ENCODE measurements at regions of chr9 and their contacts with region 1.

Region 1: DNA sequence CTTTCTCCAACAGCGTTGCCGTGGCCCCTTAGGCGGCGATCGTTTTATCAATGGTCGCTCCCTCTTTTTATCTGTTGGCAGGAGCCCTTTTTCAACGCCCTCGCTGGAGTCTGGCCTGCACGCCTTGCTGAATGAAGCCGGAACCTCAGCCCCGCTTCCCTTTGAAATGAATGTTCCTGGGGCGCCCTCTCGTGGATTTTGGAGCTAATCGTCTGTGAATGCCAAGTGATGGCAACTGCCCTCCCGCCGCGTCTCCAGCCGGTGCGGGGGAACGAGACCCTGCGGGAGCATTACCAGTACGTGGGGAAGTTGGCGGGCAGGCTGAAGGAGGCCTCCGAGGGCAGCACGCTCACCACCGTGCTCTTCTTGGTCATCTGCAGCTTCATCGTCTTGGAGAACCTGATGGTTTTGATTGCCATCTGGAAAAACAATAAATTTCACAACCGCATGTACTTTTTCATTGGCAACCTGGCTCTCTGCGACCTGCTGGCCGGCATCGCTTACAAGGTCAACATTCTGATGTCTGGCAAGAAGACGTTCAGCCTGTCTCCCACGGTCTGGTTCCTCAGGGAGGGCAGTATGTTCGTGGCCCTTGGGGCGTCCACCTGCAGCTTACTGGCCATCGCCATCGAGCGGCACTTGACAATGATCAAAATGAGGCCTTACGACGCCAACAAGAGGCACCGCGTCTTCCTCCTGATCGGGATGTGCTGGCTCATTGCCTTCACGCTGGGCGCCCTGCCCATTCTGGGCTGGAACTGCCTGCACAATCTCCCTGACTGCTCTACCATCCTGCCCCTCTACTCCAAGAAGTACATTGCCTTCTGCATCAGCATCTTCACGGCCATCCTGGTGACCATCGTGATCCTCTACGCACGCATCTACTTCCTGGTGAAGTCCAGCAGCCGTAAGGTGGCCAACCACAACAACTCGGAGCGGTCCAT is 10.0 kb downstream of the S1PR3 start:
- DNase-seq: peak; percentile 92 to 96 (median 93)
- H3K4me3 ChIP-seq: peak overlapping the region in 1 of 3 donors; percentile 4
- H3K27ac ChIP-seq: peak overlapping the region in 1 of 2 donors; percentile 3
- H3K4me1 ChIP-seq: peaks cover 0 to 10% (median 0%) of the 10 kb centered on the region in 3 donors
- H3K27me3 ChIP-seq: no peaks in the 10 kb centered on the region
- CTCF ChIP-seq: peak; percentile 81

Region 2: DNA sequence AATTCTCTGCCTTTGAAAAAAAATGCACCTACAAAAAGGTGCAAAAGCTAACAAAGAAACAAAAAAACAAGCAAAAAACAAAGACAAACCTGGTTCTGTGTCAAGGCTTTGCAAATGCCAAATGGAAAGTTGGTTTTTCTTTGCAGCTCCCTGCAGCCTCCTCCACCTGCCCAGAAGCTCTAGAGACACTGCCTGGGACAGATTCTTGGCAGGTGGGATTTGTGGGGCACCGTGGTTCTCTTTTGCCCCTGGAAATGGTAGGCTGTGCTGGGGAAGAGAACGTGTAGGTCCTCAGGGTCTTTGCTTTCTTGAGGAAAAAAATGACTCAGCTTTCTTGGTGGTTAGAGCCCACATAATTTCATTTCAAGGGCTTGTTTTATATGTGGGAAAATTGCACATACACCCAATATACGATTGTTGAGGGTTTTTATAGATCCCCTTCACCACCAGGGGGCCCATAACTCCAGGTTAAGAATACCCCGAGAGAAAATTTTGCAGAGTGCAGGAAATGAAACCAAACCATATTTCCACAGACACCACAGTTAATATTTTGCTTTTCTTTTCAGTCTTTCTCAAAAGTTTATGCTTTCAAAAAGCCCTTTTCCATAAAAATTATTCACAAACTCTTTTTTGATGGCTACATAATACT is 407.6 kb before region 1 on chr9:
- intact Hi-C with region 1: loop called (anchors 5 kb)
- DNase-seq: peak in 3 of 5 donors; percentile 40 to 81 (median 44)
- H3K4me3 ChIP-seq: no peak overlapping the region
- H3K27ac ChIP-seq: no peak overlapping the region
- H3K4me1 ChIP-seq: peaks cover 0 to 3% (median 0%) of the 10 kb centered on the region in 3 donors
- H3K27me3 ChIP-seq: no peaks in the 10 kb centered on the region
- CTCF ChIP-seq: peak; percentile 51